ENCODE measurements at regions of chr11 and their contacts with region 1.

Region 1: DNA sequence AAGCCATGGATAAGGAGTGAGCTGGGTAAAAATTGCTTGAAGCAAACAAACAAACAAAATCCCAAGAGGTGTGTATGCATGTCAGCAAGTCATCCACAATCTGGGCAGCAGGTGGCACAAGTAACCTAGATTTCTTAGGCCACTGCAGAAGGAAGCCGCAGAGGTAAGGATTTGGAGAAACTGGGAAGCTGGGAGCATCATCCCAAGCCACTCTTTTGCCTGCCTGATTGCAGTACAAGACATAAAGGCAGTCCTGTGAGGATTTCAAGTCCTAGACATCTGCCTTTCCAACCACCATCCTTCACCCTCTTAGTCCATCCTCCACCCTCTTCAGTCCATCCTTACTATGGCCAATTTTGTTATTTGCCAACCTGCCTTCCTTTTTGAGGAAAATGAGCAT is 67.2 kb upstream of the BMAL1 start:
- DNase-seq: peak; percentile 79
- ATAC-seq: peak; percentile 76
- H3K4me3 ChIP-seq: no peak overlapping the region
- H3K27ac ChIP-seq: no peak overlapping the region
- H3K4me1 ChIP-seq: peaks cover 15 to 59% of the 10 kb centered on the region in 2 experiments
- H3K27me3 ChIP-seq: no peaks in the 10 kb centered on the region
- CTCF ChIP-seq: peak; percentile 74 to 94 (median 79)
- POLR2A ChIP-seq: no peak
- RAD21 ChIP-seq: peak; percentile 98

Region 2: DNA sequence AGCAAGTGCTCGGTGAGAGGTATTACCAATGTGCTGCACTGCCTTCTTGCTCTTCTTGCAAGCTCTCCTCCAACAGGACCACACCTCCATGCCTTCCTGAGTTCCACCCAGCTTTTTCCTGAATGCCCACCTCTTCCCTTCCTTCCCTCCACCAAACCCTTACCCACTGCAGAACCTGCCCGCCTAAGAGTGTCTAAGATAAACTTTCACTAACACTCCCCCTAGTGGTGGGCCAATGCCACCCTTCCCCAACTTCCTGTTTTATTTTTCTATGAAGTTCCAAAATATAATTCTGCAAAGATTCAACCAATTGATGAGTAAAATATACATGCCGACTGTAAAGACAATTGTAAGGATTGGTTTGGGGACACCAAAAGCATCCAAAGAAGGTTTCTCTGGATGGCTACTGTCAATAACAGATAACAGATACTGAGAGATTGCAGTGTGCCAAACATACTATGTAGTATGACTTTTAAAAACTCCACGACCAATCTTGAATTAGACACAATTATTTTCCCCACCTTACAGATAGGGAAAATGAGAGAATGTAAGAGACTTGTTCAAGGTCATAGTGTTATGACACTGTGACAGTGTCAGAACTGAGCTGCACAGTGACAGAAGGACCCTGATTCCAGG is 28.6 kb after region 1 on chr11:
- CTCF ChIA-PET with region 1: interaction called, 11 read pairs
- POLR2A ChIA-PET with region 1: no interaction called
- RAD21 ChIA-PET with region 1: interaction called, 6 to 7 read pairs
- intact Hi-C with region 1: loop called (anchors 1 kb)
- DNase-seq: peak; percentile 57
- ATAC-seq: peak; percentile 98
- H3K4me3 ChIP-seq: no peak overlapping the region
- H3K27ac ChIP-seq: no peak overlapping the region
- H3K4me1 ChIP-seq: peaks cover 0 to 15% of the 10 kb centered on the region in 2 experiments; a peak in 1 of 4 replicates
- H3K27me3 ChIP-seq: no peaks in the 10 kb centered on the region
- CTCF ChIP-seq: peak; percentile 73 to 95 (median 90)
- POLR2A ChIP-seq: no peak
- RAD21 ChIP-seq: peak; percentile 76

Region 3: DNA sequence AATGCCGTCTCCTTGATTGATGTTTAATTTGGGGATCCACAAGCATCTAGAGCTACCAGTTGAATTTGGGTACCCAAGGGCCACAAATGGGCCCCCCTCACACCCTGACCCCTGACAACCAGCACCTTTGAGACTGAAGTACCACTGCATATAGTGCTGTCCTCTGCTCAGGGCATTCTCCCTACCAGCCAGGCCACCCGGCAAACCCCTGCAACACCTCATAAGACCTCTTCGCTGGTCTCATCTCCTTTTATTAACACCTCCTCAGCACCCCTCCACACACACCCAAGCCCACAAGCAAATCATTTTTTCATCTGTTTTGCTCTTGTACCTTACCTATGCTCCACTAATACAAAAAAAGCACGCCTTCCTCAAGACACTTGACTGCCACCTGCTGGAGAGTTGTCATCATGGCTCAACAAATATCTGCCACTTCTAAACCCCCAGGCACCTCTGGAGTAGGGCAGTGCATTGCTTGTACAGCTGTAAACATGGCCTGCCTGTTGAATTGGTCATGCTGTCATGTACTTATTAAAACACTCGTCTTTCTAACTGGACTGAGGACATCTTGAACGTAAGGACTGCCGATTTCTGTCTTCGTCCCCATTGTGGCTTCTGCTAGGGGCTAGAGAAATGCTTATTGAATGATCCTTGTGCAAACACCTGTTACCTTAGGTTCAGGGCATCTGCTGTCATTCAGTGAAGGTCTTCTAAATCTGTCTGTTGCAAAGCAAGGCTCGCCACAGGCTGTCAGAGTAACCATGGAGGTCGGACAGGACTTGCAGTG is 133.7 kb after region 1 on chr11:
- CTCF ChIA-PET with region 1: interaction called, 47 read pairs
- POLR2A ChIA-PET with region 1: interaction called, 3 read pairs
- RAD21 ChIA-PET with region 1: interaction called, 5 to 13 read pairs
- intact Hi-C with region 1: loop called (anchors 1 kb)
- DNase-seq: no peak
- ATAC-seq: peak; percentile 75
- H3K4me3 ChIP-seq: no peak overlapping the region
- H3K27ac ChIP-seq: no peak overlapping the region
- H3K4me1 ChIP-seq: peaks cover 11 to 28% of the 10 kb centered on the region in 2 experiments
- H3K27me3 ChIP-seq: no peaks in the 10 kb centered on the region
- CTCF ChIP-seq: peak; percentile 81 to 85 (median 82); a peak in 5 of 6 replicates
- POLR2A ChIP-seq: no peak
- RAD21 ChIP-seq: peak; percentile 89

Region 4: DNA sequence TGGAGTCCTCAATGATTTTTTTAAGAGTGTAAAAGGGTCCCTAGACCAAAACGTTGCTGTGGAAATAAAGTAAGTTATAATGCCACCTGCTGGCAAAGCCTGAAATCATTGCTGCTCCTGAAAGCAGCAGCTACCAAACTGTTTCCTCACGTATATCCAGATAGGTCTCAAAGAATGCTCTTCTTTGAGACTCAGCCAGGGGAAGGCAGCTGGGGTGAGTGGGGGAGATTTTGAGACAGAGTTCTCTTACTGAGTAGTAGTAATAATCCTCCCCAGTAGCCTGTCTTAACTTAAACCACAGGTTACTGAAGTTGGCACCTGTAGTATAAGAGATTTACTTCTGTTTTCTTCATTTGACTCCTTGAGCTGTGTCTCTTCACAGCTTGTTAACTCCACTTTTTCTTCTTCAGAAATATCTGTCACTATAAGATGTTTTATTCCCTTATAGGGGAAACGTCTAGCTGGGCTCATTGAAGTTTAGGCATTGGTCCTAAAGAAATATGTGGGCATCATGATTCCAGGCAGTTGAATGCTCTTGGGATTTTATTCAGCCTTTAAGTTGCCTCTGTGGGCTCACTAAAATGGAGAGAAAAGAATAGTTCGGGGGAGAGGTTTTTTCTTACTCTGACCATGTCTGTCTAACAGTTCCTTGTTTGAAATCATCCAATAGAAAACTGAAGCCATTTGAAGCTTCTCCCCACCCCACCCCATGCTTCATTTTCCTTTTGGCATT is 174.7 kb after region 1 on chr11:
- CTCF ChIA-PET with region 1: interaction called, 57 read pairs
- POLR2A ChIA-PET with region 1: no interaction called
- RAD21 ChIA-PET with region 1: interaction called in 1 of 2 experiments, 3 read pairs
- intact Hi-C with region 1: loop called (anchors 1 kb)
- DNase-seq: peak; percentile 23
- ATAC-seq: peak; percentile 78
- H3K4me3 ChIP-seq: no peak overlapping the region
- H3K27ac ChIP-seq: no peak overlapping the region
- H3K4me1 ChIP-seq: no peaks in the 10 kb centered on the region
- H3K27me3 ChIP-seq: no peaks in the 10 kb centered on the region
- CTCF ChIP-seq: peak; percentile 55 to 64 (median 63)
- POLR2A ChIP-seq: no peak
- RAD21 ChIP-seq: peak; percentile 58

Region 5: DNA sequence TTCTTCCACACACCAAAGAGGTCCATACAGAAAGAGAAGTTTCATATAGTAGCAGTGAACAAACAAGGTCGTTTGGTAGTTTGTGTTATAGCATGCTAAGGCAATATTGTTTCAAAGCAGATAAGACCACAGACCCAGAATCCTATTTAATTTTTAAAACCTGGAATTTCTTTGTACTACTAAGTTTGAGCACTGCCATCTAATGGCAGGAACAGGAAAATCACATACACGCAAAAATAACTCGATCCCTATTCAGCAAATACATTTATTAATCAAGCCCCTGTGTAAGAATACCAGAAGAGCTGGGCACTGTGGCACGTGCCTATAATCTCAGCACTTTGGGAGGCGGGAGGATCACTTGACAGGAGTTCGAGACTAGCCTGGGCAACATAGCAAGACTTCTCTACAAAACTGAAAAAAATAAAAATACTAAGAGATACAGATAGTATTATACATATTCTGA is 255.5 kb after region 1 on chr11:
- CTCF ChIA-PET with region 1: no interaction called
- POLR2A ChIA-PET with region 1: no interaction called
- RAD21 ChIA-PET with region 1: no interaction called
- intact Hi-C with region 1: loop called (anchors 1 kb)
- DNase-seq: peak; percentile 70
- ATAC-seq: 0 out of 2 replicates have a peak, but pooled peaks have one; percentile 16
- H3K4me3 ChIP-seq: no peak overlapping the region
- H3K27ac ChIP-seq: no peak overlapping the region
- H3K4me1 ChIP-seq: peaks cover 10 to 21% of the 10 kb centered on the region in 2 experiments
- H3K27me3 ChIP-seq: no peaks in the 10 kb centered on the region
- CTCF ChIP-seq: peak; percentile 37 to 62 (median 46); a peak in 5 of 6 replicates
- POLR2A ChIP-seq: no peak
- RAD21 ChIP-seq: peak; percentile 53